HepG2 (cell line): ENCODE measurements at regions of chrX and their contacts with region 1.

Region 1: GRCh38 chrX:51336584-51336983 is 4.0 kb downstream of the NUDT10 start:
- DNase-seq: peak; percentile 13
- ATAC-seq: peak; percentile 69
- H3K4me3 ChIP-seq: no peak overlapping the region
- H3K27ac ChIP-seq: no peak overlapping the region
- H3K4me1 ChIP-seq: no peaks in the 10 kb centered on the region
- H3K27me3 ChIP-seq: no peaks in the 10 kb centered on the region
- CTCF ChIP-seq: peak; percentile 47
- EP300 ChIP-seq: no peak
- POLR2A ChIP-seq: no peak
- RAD21 ChIP-seq: no peak

Region 2: GRCh38 chrX:49862093-49862492 is 1474.5 kb before region 1 on chrX:
- CTCF ChIA-PET with region 1: no interaction called
- POLR2A ChIA-PET with region 1: no interaction called
- in situ Hi-C with region 1: no loop called
- intact Hi-C with region 1: no loop called
- DNase-seq: peak; percentile 59
- ATAC-seq: peak; percentile 76
- H3K4me3 ChIP-seq: no peak overlapping the region
- H3K27ac ChIP-seq: peak overlapping the region; percentile 65
- H3K4me1 ChIP-seq: peaks cover 57% of the 10 kb centered on the region
- H3K27me3 ChIP-seq: no peaks in the 10 kb centered on the region
- CTCF ChIP-seq: no peak
- EP300 ChIP-seq: peak in 1 of 2 experiments; percentile 72; a peak in 2 of 4 replicates
- POLR2A ChIP-seq: no peak
- RAD21 ChIP-seq: no peak

Region 3: GRCh38 chrX:51420610-51421009 is 84.0 kb after region 1 on chrX:
- CTCF ChIA-PET with region 1: no interaction called
- POLR2A ChIA-PET with region 1: no interaction called
- in situ Hi-C with region 1: no loop called
- intact Hi-C with region 1: loop called (anchors 2 kb)
- DNase-seq: peak; percentile 5
- ATAC-seq: no peak
- H3K4me3 ChIP-seq: no peak overlapping the region
- H3K27ac ChIP-seq: no peak overlapping the region
- H3K4me1 ChIP-seq: no peaks in the 10 kb centered on the region
- H3K27me3 ChIP-seq: no peaks in the 10 kb centered on the region
- CTCF ChIP-seq: peak; percentile 52
- EP300 ChIP-seq: no peak
- POLR2A ChIP-seq: no peak
- RAD21 ChIP-seq: no peak